Heart left ventricle (tissue), 16 donors: ENCODE measurements at regions of chr3 and their contacts with region 1.

Region 1: GRCh38 chr3:148297013-148297412 is 400.7 kb upstream of the AGTR1 start:
- DNase-seq: no peak
- ATAC-seq: no peak
- H3K4me3 ChIP-seq: no peak overlapping the region
- H3K27ac ChIP-seq: no peak overlapping the region
- H3K4me1 ChIP-seq: no peaks in the 10 kb centered on the region
- H3K27me3 ChIP-seq: no peaks in the 10 kb centered on the region
- CTCF ChIP-seq: no peak
- POLR2A ChIP-seq: no peak

Region 2: DNA sequence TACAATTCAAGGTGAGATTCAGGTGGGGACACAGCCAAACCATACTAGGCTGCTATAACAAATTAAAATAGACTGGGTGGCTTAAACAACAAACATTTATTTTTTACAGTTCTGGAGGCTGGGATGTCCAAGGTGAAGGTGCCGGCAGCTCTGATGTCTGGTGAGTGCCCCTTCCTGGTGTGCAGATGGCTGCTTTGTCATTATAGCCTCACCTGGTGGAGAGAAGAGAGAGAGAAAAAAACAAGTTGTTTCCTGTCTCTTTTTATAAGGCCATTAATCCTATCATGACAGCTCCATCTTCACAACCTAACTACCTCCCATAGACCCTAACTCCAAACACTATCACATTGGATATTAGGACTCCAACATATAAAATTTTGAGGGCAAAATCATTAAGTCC is 608.1 kb before region 1 on chr3:
- intact Hi-C with region 1: no loop called
- DNase-seq: no peak
- ATAC-seq: no peak
- H3K4me3 ChIP-seq: no peak overlapping the region
- H3K27ac ChIP-seq: no peak overlapping the region
- H3K4me1 ChIP-seq: no peaks in the 10 kb centered on the region
- H3K27me3 ChIP-seq: no peaks in the 10 kb centered on the region
- CTCF ChIP-seq: no peak
- POLR2A ChIP-seq: no peak

Region 3: DNA sequence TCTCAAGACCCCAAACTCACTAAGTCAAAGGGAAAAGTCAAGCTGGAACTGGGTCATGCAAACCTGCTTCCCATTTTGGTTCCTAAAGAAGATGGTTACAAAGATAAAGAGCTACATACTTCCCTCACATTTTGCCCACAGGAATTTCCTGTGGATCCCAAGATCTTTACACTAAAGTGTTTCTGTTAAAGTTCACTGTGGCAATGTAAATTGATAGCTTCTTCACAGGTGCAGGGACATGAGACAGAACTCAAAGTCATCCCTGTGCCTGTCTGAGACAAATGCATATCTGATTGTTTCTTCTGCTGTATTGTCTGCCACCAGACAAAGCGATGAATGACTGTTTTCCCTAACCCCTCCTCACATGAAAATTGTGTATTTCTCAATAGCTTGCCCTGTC is 320.0 kb before region 1 on chr3:
- intact Hi-C with region 1: no loop called
- DNase-seq: no peak
- ATAC-seq: no peak
- H3K4me3 ChIP-seq: no peak overlapping the region
- H3K27ac ChIP-seq: no peak overlapping the region
- H3K4me1 ChIP-seq: no peaks in the 10 kb centered on the region
- H3K27me3 ChIP-seq: no peaks in the 10 kb centered on the region
- CTCF ChIP-seq: no peak
- POLR2A ChIP-seq: no peak

Region 4: GRCh38 chr3:148233403-148233802 is 63.6 kb before region 1 on chr3:
- intact Hi-C with region 1: loop called in 1 of 10 experiments (anchors 10 kb)
- DNase-seq: no peak
- ATAC-seq: no peak
- H3K4me3 ChIP-seq: no peak overlapping the region
- H3K27ac ChIP-seq: no peak overlapping the region
- H3K4me1 ChIP-seq: no peaks in the 10 kb centered on the region
- H3K27me3 ChIP-seq: peaks cover 0 to 4% (median 0%) of the 10 kb centered on the region in 9 donors
- CTCF ChIP-seq: no peak
- POLR2A ChIP-seq: no peak

Region 5: GRCh38 chr3:148866261-148866660 is 569.2 kb after region 1 on chr3:
- intact Hi-C with region 1: no loop called
- DNase-seq: no peak
- ATAC-seq: no peak
- H3K4me3 ChIP-seq: no peak overlapping the region
- H3K27ac ChIP-seq: no peak overlapping the region
- H3K4me1 ChIP-seq: no peaks in the 10 kb centered on the region
- H3K27me3 ChIP-seq: peaks cover 0 to 26% (median 3%) of the 10 kb centered on the region in 9 donors
- CTCF ChIP-seq: no peak
- POLR2A ChIP-seq: no peak